MCF 10A (cell line): ENCODE measurements at regions of chr15 and their contacts with region 1.

Region 1: DNA sequence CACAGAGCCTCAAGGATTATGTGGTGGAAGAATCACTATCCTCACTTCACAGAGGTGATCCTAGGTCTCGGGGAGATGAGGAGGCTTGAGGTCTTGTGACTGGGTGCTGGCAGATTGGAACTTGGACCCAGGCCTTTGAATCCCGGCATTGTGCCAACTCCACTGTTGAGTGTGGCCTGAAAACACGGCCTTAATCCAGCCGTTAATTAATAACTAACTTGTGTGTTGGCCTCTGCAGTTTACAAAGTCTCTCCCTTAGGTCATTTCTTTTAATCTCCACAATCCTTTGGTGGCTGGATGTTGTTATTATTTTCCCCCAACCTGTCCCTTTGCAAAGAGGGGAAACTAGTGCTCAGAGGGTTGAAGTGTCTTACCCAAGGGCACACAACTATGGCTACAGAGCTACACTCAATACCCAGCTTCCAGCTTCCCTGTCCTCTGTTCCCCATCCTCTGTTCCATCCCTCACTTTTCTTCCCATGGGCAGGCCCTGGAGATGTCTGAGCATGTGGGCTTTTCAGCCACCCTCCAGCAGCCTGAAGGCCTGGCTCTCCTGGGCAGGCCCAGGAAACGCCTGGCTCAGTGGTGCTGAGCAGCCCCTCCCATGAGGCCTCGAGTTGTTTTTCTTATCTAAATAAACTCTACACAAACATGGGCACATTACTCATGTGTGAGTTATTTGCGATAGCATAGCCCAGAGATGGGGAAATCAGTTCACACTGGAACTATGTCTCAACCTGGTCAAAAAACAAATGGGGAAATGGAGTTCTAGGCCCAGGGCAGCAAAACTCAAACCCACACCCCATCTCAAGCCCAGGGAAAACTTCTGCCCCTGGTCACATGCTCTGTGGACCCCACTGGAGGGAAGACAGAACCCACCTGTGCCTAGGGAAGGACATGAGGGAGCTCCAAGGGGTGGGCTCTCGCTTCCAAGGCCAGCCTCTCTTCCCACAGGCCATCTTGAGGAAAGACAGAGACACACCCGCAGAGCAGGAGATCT is 16.8 kb upstream of the SMAD3 start:
- DNase-seq: peak; percentile 88
- H3K4me3 Mint-ChIP-seq: no peak overlapping the region
- H3K27ac Mint-ChIP-seq: peak overlapping the region; percentile 94
- H3K4me1 Mint-ChIP-seq: peaks cover 45% of the 10 kb centered on the region
- H3K27me3 Mint-ChIP-seq: no peaks in the 10 kb centered on the region
- CTCF ChIP-seq: no peak

Region 2: GRCh38 chr15:66803182-66803729 is 245.3 kb before region 1 on chr15:
- CTCF ChIA-PET with region 1: no interaction called
- POLR2A ChIA-PET with region 1: no interaction called
- intact Hi-C with region 1: loop called (anchors 10 kb)
- DNase-seq: peak; percentile 97
- H3K4me3 Mint-ChIP-seq: peak overlapping the region; percentile 50
- H3K27ac Mint-ChIP-seq: peak overlapping the region; percentile 98
- H3K4me1 Mint-ChIP-seq: peaks cover 32% of the 10 kb centered on the region
- H3K27me3 Mint-ChIP-seq: no peaks in the 10 kb centered on the region
- CTCF ChIP-seq: no peak

Region 3: DNA sequence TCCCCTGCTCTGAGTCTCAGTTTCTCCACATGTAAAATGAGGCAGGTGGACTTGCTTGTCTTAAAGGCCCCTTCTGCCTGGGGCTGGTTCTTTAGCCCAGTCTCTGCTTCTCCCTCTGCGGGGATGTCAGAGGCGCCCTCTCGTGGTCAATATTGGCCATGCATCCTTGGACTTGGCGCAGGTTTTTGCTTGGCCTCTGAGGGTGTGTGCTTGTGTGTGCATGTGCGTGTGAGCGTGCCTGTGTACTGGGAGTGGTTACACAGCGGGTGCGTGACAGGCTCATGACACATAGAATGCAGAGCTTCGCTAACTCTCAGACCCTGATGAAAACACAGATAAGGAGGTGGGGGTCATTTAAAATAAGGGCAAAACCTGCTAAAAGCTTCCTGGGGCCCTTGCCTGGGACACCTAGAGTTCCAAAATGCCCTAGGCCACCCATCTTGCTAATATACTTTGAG is 185.7 kb before region 1 on chr15:
- CTCF ChIA-PET with region 1: no interaction called
- POLR2A ChIA-PET with region 1: no interaction called
- intact Hi-C with region 1: no loop called
- DNase-seq: peak; percentile 84
- H3K4me3 Mint-ChIP-seq: no peak overlapping the region
- H3K27ac Mint-ChIP-seq: no peak overlapping the region
- H3K4me1 Mint-ChIP-seq: peaks cover 20% of the 10 kb centered on the region
- H3K27me3 Mint-ChIP-seq: no peaks in the 10 kb centered on the region
- CTCF ChIP-seq: peak; percentile 86

Region 4: DNA sequence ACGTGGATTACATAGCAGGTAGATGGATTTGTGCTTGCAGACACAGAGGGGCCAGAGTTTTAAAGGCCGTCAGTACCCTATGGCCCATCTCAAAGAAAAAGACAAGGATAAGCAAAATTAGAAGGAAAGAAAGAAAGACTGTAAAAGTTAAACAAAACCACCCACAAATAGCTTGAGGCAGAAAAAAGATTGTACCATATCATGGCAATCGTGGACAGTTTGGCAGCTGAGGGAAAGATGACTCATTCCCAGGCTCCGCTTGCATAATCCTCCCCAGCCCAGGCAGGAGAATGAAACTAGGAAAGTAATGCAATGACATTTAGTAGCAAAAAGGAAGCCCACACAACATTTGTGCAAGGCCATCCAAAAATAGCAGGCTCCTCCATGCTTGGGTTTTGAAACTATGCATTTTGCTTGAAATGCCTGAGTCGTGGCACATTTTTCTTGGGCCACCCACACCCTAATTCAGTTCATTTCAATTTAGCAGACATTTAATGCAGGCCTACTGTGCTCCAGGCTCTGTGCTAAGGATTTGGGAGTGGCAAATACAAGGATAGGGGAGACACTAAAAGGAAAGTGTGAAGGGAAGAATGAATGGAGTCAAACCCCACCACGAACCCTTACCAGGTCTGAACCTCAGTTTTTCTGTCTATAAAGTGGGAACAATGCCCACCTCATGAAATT is 24.1 kb before region 1 on chr15:
- CTCF ChIA-PET with region 1: interaction called, 4 read pairs
- POLR2A ChIA-PET with region 1: interaction called, 17 read pairs
- intact Hi-C with region 1: no loop called
- DNase-seq: peak; percentile 97
- H3K4me3 Mint-ChIP-seq: no peak overlapping the region
- H3K27ac Mint-ChIP-seq: peak overlapping the region; percentile 72
- H3K4me1 Mint-ChIP-seq: peaks cover 39% of the 10 kb centered on the region
- H3K27me3 Mint-ChIP-seq: no peaks in the 10 kb centered on the region
- CTCF ChIP-seq: no peak

Region 5: DNA sequence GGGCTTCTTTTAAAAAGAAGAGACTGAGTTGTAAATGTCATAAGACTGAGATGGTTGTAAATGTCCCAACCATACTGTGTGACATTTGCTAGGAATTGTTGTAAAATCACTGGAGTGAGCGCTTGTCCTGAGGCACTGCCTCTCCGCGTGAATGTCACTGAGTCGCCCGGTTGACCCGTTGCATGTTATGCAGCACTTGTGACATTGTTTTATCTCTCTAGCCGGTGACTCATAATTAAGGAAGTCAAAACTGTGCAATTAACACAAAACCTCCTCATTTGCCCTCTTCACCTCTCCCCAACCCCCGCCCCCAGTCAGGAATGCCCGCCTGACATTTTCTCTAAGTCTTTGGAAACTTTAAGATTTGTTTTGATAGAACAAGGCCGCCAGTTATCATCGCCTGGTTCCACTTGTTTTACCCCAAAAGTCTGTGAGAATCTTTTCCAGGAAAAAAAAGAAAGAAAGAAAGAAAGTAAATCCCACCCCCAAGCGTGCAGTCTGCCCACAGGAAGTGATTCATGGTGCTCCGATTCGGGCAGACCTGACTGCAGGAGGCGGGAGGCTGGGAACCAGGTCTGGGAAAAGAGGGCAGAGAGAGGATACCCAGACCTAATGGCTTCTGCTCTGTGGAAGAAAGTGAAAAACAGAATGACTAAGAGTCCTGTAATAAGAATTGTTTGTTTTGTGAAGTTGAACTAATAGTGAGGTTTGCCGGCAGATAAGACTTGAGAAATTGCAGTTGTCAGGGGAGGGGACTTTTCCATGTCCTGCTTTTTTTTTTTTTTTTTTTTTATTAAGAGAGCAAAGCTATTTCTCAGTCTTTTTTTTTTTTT is 101.7 kb after region 1 on chr15:
- CTCF ChIA-PET with region 1: no interaction called
- POLR2A ChIA-PET with region 1: interaction called, 6 read pairs
- intact Hi-C with region 1: loop called (anchors 1 kb)
- DNase-seq: peak; percentile 97
- H3K4me3 Mint-ChIP-seq: peak overlapping the region; percentile 71
- H3K27ac Mint-ChIP-seq: peak overlapping the region; percentile 94
- H3K4me1 Mint-ChIP-seq: peaks cover 45% of the 10 kb centered on the region
- H3K27me3 Mint-ChIP-seq: no peaks in the 10 kb centered on the region
- CTCF ChIP-seq: no peak

Region 6: DNA sequence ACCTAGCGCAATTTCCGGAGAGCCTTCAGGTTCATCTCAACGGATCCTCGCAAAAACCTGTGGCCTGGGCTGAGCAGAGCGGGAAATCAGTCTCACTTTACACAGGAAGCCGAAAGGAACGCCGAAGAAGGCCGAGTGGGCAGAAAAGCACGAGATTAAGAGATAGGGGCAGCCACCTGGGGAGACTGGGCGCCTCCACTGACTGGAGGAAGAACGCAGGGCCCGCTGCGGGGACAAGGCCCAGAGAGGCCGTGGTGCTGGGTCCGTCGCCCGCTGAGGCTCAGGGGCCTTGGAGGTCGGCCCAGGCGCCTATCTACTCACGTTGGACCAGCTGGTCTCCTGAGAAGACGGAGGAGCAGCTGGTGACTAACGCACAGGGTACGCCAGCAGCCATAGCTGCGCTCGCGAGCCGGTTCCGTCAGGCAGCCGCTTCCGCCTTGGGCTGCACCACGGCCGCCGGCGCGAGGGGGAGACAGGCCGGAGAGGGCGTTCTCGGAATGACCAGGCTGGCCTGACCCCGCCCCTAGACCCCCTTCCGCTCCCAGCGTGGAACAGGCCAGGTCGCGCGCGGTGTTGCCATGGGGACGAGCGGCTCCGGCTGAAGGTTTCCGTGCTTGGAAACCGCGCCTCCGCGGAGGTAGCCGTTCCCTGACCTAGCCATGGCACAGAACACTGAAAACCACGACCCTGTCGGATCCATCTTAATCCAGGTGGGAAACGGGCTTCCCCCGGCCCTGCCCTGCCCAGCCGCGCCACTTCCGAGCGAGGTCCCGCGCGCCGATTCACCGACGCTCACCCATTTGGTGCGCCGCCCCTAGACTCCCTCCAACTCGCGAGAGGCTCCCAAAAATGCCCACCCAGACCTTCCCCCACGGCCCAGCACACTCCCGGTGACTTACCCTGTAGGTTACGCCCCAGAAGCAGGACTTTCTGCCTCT is 205.9 kb after region 1 on chr15 and contains the starts of genes AAGAB and IQCH:
- CTCF ChIA-PET with region 1: no interaction called
- POLR2A ChIA-PET with region 1: interaction called, 20 read pairs
- intact Hi-C with region 1: no loop called
- DNase-seq: peak; percentile 96
- H3K4me3 Mint-ChIP-seq: peak within 1 kb of the TSS; percentile 97
- H3K27ac Mint-ChIP-seq: peak within 1 kb of the TSS; percentile 99
- H3K4me1 Mint-ChIP-seq: peaks cover 19% of the 10 kb centered on the region
- H3K27me3 Mint-ChIP-seq: no peaks in the 10 kb centered on the region
- CTCF ChIP-seq: no peak
- total RNA-seq, gene AAGAB: 52.7 and 60.7 TPM in 2 replicates
- total RNA-seq, gene IQCH: 4.4 and 5.0 TPM in 2 replicates